Activated CD8-positive, alpha-beta T cell treated with anti-CD3 and anti-CD28 coated beads, Interleukin-2, amount 10 ng/mL, durations not matched to agents 7 days and 5 days (primary cell): ENCODE measurements at regions of chr2 and their contacts with region 1.

Region 1: DNA sequence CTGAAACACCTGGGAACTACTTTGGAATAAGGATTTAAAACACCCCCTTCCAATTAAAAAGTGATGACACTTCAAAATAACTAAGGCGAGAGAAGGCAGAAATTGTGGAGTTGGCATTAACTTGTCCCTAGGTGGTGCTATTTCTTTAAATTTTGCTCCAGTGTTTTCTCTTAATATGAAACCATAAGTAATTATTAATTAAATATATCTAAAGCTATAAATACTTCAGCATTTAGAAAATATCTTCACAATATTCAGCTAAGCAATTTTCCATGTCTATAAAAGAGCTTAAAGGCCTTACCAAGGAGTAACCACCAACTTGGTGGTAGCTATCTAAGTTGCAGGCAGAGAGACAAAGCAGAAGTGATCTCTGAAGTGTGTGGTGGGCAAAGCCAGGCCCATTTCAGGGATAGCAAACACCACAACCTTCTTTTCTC is 186.8 kb upstream of the PGAP1 start:
- DNase-seq: no peak
- ATAC-seq: no peak
- H3K4me3 Mint-ChIP-seq: no peak overlapping the region
- H3K27ac Mint-ChIP-seq: peak overlapping the region; percentile 81
- H3K4me1 Mint-ChIP-seq: peaks cover 25% of the 10 kb centered on the region
- H3K27me3 Mint-ChIP-seq: no peaks in the 10 kb centered on the region

Region 2: GRCh38 chr2:196935432-196935831 is 177.9 kb before region 1 on chr2:
- CTCF ChIA-PET with region 1: no interaction called
- POLR2A ChIA-PET with region 1: no interaction called
- DNase-seq: no peak
- ATAC-seq: no peak
- H3K4me3 Mint-ChIP-seq: no peak overlapping the region
- H3K27ac Mint-ChIP-seq: no peak overlapping the region
- H3K4me1 Mint-ChIP-seq: no peaks in the 10 kb centered on the region
- H3K27me3 Mint-ChIP-seq: no peaks in the 10 kb centered on the region

Region 3: GRCh38 chr2:197037863-197038398 is 75.4 kb before region 1 on chr2:
- CTCF ChIA-PET with region 1: no interaction called
- POLR2A ChIA-PET with region 1: no interaction called
- DNase-seq: no peak
- ATAC-seq: no peak
- H3K4me3 Mint-ChIP-seq: no peak overlapping the region
- H3K27ac Mint-ChIP-seq: no peak overlapping the region
- H3K4me1 Mint-ChIP-seq: peaks cover 5% of the 10 kb centered on the region
- H3K27me3 Mint-ChIP-seq: no peaks in the 10 kb centered on the region

Region 4: GRCh38 chr2:197081294-197081693 is 32.0 kb before region 1 on chr2:
- CTCF ChIA-PET with region 1: no interaction called
- POLR2A ChIA-PET with region 1: no interaction called
- DNase-seq: no peak
- ATAC-seq: no peak
- H3K4me3 Mint-ChIP-seq: no peak overlapping the region
- H3K27ac Mint-ChIP-seq: no peak overlapping the region
- H3K4me1 Mint-ChIP-seq: no peaks in the 10 kb centered on the region
- H3K27me3 Mint-ChIP-seq: no peaks in the 10 kb centered on the region

Region 5: DNA sequence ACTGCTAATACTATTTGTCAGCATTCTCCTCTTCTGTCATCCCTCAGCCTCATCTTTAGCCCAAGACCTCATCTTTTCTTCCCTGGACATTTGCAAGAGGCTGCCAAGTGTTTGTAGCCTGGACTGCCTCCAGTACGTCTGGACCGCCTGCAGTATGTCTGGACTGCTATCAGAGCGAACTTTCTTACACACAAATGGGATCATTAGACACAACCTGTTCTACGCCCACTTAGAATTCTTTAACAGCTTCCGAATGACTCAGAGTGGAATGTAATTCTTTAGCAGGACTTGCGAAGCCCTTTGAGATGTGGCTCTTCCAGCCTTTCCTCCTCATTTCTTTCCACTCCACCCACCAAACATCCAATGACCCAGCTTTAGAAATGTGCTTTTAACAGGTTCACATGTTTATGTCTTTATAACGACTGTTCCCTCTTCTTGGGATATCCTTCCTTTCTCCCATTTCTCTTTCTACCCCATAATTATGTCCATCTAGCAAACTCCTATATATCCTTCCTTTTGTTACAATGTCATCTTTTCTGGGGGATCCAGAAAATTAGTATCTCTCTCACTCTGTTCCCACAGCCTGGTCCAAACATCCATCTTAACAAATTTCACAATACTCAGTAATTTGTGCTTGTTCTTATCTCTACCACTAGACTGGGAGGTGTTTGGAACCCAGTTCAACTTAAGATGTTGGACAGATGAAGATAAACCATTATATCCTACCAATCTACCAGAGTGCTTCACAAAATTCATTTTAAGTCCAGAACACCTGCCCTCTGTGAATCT is 15.5 kb before region 1 on chr2:
- CTCF ChIA-PET with region 1: interaction called, 17 read pairs
- POLR2A ChIA-PET with region 1: no interaction called
- DNase-seq: no peak
- ATAC-seq: no peak
- H3K4me3 Mint-ChIP-seq: no peak overlapping the region
- H3K27ac Mint-ChIP-seq: no peak overlapping the region
- H3K4me1 Mint-ChIP-seq: peaks cover 6% of the 10 kb centered on the region
- H3K27me3 Mint-ChIP-seq: no peaks in the 10 kb centered on the region

Region 6: GRCh38 chr2:197137231-197137630 is 23.9 kb after region 1 on chr2:
- CTCF ChIA-PET with region 1: interaction called, 27 read pairs
- POLR2A ChIA-PET with region 1: no interaction called
- DNase-seq: no peak
- ATAC-seq: no peak
- H3K4me3 Mint-ChIP-seq: no peak overlapping the region
- H3K27ac Mint-ChIP-seq: peak overlapping the region; percentile 17
- H3K4me1 Mint-ChIP-seq: peaks cover 88% of the 10 kb centered on the region
- H3K27me3 Mint-ChIP-seq: no peaks in the 10 kb centered on the region

Region 7: GRCh38 chr2:197168705-197169104 is 55.4 kb after region 1 on chr2:
- CTCF ChIA-PET with region 1: interaction called, 145 read pairs
- POLR2A ChIA-PET with region 1: interaction called, 8 read pairs
- DNase-seq: peak; percentile 81
- ATAC-seq: peak; percentile 83
- H3K4me3 Mint-ChIP-seq: no peak overlapping the region
- H3K27ac Mint-ChIP-seq: peak overlapping the region; percentile 58
- H3K4me1 Mint-ChIP-seq: peaks cover 46% of the 10 kb centered on the region
- H3K27me3 Mint-ChIP-seq: no peaks in the 10 kb centered on the region

Region 8: DNA sequence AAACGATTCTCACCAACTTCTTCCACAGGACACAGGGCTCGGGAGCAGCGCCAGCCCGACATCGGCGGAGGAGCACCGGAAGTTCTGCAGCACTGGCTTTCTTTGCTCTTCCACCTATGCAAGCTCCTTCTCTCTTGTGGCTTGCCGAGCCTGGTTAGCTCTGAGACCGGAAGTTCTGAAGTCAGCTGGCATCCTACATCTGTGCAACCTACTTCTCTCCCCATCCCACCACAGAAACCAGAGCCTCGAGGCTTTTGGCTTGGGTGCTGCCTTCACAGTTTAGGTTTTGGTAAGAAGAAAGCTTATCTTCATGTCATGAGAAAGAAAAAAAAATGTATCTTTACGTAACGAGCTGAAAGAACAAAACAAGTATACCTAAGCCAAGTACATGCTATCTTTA is 85.6 kb after region 1 on chr2:
- CTCF ChIA-PET with region 1: interaction called, 18 read pairs
- POLR2A ChIA-PET with region 1: no interaction called
- DNase-seq: peak; percentile 97
- ATAC-seq: peak; percentile 82
- H3K4me3 Mint-ChIP-seq: peak overlapping the region; percentile 81
- H3K27ac Mint-ChIP-seq: peak overlapping the region; percentile 93
- H3K4me1 Mint-ChIP-seq: peaks cover 89% of the 10 kb centered on the region
- H3K27me3 Mint-ChIP-seq: no peaks in the 10 kb centered on the region

Region 9: DNA sequence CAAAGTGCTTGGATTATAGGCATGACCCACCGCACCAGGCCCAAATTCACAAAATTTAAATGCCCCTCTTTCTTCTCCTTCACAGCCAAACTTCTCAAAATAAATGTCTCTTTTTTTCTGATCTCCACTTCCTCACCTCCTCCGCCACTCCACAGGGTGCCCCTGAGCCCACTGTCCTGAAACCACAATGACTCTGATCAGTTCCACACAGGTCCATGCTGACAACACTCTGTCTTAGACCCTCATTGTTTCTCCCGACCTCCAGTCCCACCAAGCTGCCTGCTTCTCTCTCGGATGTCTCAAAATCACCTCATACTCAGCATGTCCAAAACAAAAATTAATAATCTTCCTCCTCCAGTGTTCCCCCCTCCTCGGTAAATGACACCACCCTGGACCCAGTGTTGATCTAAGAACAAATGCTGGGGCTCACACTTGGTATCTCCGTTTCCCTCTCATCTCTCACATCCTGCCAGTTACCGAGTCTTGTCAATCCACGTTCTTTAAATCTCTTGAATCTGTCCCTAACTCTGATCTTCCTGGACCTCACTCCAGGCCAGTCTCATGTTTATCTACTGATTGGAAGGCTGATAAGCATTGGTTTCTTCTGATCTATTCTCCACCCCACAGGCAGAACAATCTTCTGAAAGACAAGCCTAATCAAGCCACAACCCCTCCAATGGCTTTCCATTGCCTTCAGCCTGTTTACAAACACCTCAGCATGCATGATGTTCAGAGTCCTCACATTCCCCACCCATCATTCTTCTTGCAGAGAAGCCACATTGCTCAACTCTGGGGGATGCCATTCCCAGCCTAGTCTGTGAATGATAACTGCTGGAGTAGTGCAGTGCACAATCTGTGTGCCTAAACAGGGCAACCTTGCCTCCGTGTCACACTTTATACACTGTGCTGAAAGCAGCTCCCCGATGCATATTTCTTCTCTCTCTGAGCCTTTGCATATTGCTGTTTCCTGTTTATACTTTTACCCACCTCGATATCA is 209.7 kb after region 1 on chr2:
- CTCF ChIA-PET with region 1: interaction called, 10 read pairs
- POLR2A ChIA-PET with region 1: no interaction called
- DNase-seq: peak; percentile 46
- ATAC-seq: peak; percentile 77
- H3K4me3 Mint-ChIP-seq: peak overlapping the region; percentile 58
- H3K27ac Mint-ChIP-seq: peak overlapping the region; percentile 91
- H3K4me1 Mint-ChIP-seq: peaks cover 52% of the 10 kb centered on the region
- H3K27me3 Mint-ChIP-seq: no peaks in the 10 kb centered on the region

Region 10: GRCh38 chr2:197383823-197384222 is 270.5 kb after region 1 on chr2:
- CTCF ChIA-PET with region 1: interaction called, 13 read pairs
- POLR2A ChIA-PET with region 1: no interaction called
- DNase-seq: no peak
- ATAC-seq: no peak
- H3K4me3 Mint-ChIP-seq: no peak overlapping the region
- H3K27ac Mint-ChIP-seq: no peak overlapping the region
- H3K4me1 Mint-ChIP-seq: peaks cover 2% of the 10 kb centered on the region
- H3K27me3 Mint-ChIP-seq: peaks cover 12% of the 10 kb centered on the region